CD4-positive, alpha-beta T cell (primary cell): ENCODE measurements at regions of chr19 and their contacts with region 1.

Region 1: GRCh38 chr19:43526884-43527859 is at the start of gene ETHE1:
- DNase-seq: peak; percentile 30 to 81 (median 68)
- ATAC-seq: peak; percentile 67
- H3K4me3 ChIP-seq: peak within 1 kb of the TSS; percentile 93
- H3K4me3 Mint-ChIP-seq: peak within 1 kb of the TSS; percentile 77
- H3K27ac ChIP-seq: peak within 1 kb of the TSS; percentile 66 to 73
- H3K27ac Mint-ChIP-seq: peak within 1 kb of the TSS; percentile 76
- H3K4me1 ChIP-seq: peaks cover 32% of the 10 kb centered on the region
- H3K4me1 Mint-ChIP-seq: peaks cover 28% of the 10 kb centered on the region
- H3K27me3 ChIP-seq: no peaks in the 10 kb centered on the region
- H3K27me3 Mint-ChIP-seq: no peaks in the 10 kb centered on the region
- CTCF ChIP-seq: no peak
- total RNA-seq, gene ETHE1: 20.2 to 21.7 TPM

Region 2: GRCh38 chr19:43329989-43330388 is 197.2 kb before region 1 on chr19:
- CTCF ChIA-PET with region 1: no interaction called
- POLR2A ChIA-PET with region 1: no interaction called
- intact Hi-C with region 1: no loop called
- DNase-seq: no peak
- ATAC-seq: no peak
- H3K4me3 ChIP-seq: no peak overlapping the region
- H3K4me3 Mint-ChIP-seq: no peak overlapping the region
- H3K27ac ChIP-seq: no peak overlapping the region
- H3K27ac Mint-ChIP-seq: no peak overlapping the region
- H3K4me1 ChIP-seq: no peaks in the 10 kb centered on the region
- H3K4me1 Mint-ChIP-seq: no peaks in the 10 kb centered on the region
- H3K27me3 ChIP-seq: no peaks in the 10 kb centered on the region
- H3K27me3 Mint-ChIP-seq: peaks cover 3% of the 10 kb centered on the region
- CTCF ChIP-seq: no peak

Region 3: DNA sequence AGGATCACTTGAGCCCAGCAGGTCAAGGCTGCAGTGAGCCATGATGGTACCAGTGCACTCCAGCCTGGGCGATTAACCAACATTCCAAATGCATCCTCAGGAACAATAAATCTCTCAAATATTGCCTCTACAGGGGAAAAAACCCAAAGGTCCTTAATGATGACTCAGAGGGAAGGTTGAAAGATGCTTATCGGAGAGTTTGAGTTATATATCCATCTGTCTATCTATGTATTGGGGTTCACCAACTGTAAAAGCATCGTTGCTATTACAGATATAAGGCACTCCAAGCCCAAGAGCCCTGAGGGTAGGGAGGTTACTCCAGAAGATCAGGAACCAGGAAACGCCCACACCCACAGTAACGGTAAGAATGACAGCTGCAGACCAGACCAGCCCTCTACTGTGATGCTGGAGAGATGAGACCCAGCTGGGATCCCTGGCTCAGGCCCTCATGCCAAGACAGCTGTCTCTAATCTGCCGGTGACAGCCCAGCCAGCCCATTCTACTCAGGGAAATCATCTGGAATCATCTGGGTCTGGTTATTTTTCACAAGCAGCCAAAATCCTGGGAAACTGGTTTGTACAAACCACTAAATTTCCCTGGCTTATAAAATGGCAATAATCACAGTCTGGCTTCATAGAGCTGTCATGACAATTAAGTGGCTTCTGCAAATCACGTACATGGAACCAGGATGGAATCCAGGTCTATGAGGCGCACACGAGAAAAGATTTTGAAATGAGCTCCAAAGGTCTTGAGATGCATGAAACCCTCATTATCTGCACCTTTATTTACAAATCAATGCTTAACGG is 88.7 kb before region 1 on chr19:
- CTCF ChIA-PET with region 1: no interaction called
- POLR2A ChIA-PET with region 1: interaction called, 25 read pairs
- intact Hi-C with region 1: no loop called
- DNase-seq: peak in 7 of 14 experiments; percentile 10 to 34 (median 26)
- ATAC-seq: peak; percentile 37
- H3K4me3 ChIP-seq: no peak overlapping the region
- H3K4me3 Mint-ChIP-seq: peak overlapping the region; percentile 76
- H3K27ac ChIP-seq: peak overlapping the region; percentile 74 to 90
- H3K27ac Mint-ChIP-seq: peak overlapping the region; percentile 96
- H3K4me1 ChIP-seq: peaks cover 41% of the 10 kb centered on the region
- H3K4me1 Mint-ChIP-seq: peaks cover 64% of the 10 kb centered on the region
- H3K27me3 ChIP-seq: no peaks in the 10 kb centered on the region
- H3K27me3 Mint-ChIP-seq: no peaks in the 10 kb centered on the region
- CTCF ChIP-seq: no peak

Region 4: DNA sequence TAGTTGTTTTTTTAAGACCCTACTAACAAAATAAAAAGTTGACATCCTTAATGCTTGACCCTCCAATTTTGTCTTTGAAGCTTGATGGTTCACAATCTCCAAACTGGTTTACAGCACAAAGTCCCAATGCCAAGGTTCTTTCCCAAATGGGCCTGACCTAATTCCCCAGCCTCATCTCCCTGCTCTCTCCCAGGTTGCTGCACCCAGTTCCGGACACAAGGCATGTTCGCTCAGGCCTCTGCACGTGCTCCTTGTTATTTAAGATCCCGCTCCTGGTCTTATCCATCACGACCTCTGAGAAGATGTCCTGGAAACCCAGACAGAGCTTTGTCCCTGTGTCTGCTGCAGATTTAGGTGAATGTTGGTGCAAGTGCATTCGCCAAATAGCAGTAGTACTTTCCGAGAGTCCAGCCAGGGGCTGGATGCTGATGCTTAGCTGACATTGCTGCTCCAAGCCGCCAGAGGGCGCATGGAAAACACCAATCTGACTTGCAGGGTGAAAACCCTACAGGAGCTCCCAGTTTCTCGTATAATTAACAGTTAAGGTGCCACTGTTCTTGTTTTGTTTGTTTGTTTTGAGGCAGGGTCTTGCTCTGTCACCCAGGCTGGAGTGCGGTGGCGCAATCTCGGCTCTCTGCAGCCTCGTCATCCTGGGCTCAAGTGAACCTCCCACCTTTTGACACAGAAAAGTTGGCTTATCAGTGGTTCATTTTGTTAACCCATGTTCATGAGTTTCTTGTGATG is 80.3 kb before region 1 on chr19:
- CTCF ChIA-PET with region 1: interaction called, 16 read pairs
- POLR2A ChIA-PET with region 1: interaction called, 6 read pairs
- intact Hi-C with region 1: no loop called
- DNase-seq: peak; percentile 74 to 91 (median 79)
- ATAC-seq: peak; percentile 86
- H3K4me3 ChIP-seq: no peak overlapping the region
- H3K4me3 Mint-ChIP-seq: no peak overlapping the region
- H3K27ac ChIP-seq: no peak overlapping the region
- H3K27ac Mint-ChIP-seq: peak overlapping the region; percentile 81
- H3K4me1 ChIP-seq: peaks cover 19% of the 10 kb centered on the region
- H3K4me1 Mint-ChIP-seq: peaks cover 39% of the 10 kb centered on the region
- H3K27me3 ChIP-seq: no peaks in the 10 kb centered on the region
- H3K27me3 Mint-ChIP-seq: no peaks in the 10 kb centered on the region
- CTCF ChIP-seq: peak; percentile 97

Region 5: DNA sequence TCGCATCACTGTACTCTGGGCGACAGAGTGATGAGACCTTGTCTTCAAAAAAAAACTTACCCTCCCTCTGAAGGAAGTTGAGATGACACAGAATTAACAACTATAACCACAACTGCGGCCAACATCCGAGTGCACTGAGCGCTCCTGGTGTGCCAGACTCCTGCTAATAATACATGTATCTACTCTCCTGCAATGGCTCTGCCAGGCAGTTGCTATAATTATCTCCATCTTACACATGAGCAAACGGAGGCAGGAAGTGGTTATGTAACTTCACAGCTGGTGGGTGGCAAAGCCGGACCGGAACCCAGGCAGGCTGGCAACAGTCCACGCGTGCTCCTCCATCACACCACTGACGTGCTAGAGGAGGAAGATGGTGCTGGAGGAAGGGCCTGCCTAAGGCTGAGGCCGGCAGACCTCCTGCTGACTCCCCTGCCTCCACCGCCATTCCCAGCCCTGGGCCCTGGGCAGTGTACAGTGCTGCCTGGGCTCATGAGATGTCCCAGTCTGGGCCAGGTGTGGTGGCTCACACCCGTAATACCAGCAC is 35.6 kb after region 1 on chr19:
- CTCF ChIA-PET with region 1: interaction called, 3 read pairs
- POLR2A ChIA-PET with region 1: no interaction called
- intact Hi-C with region 1: loop called in 1 of 2 experiments (anchors 5 kb)
- DNase-seq: peak; percentile 56 to 96 (median 74)
- ATAC-seq: peak; percentile 89
- H3K4me3 ChIP-seq: peak overlapping the region; percentile 47
- H3K4me3 Mint-ChIP-seq: peak overlapping the region; percentile 85
- H3K27ac ChIP-seq: peak overlapping the region; percentile 82 to 93
- H3K27ac Mint-ChIP-seq: peak overlapping the region; percentile 96
- H3K4me1 ChIP-seq: peaks cover 50% of the 10 kb centered on the region
- H3K4me1 Mint-ChIP-seq: peaks cover 62% of the 10 kb centered on the region
- H3K27me3 ChIP-seq: no peaks in the 10 kb centered on the region
- H3K27me3 Mint-ChIP-seq: no peaks in the 10 kb centered on the region
- CTCF ChIP-seq: no peak